Common myeloid progenitor, CD34-positive (primary cell): ENCODE measurements at regions of chr6 and their contacts with region 1.

Region 1: DNA sequence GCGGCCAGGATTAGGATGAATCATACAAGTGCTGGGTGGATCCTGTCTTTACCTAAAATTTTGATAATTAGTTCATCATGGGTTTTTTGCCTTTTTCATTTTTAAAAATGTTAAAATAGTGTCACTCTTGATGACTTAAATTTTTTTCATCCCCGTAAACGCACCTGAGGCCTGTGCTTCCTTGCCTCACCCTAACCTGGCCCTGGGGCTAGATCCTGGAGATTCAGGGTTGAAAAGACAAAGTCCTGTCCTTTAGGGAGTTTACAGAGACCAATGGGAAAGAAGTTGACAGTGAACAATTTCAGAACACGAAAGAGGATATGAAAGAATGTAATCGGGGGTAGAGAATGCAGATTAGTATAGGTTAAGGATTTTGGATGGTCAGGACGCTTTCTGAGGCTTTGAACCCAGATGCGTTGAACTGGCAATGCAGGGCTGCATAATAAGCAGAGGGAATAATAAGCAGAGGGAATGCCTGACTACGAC is 1.6 kb upstream of the FBXO5 start:
- DNase-seq: no peak
- H3K4me3 ChIP-seq: peak overlapping the region in 6 of 7 experiments; percentile 79 to 99 (median 90)
- H3K27ac ChIP-seq: peak overlapping the region; percentile 80 to 94
- H3K4me1 ChIP-seq: peaks cover 14 to 38% (median 29%) of the 10 kb centered on the region in 4 experiments
- H3K27me3 ChIP-seq: no peaks in the 10 kb centered on the region

Region 2: GRCh38 chr6:152854086-152854795 is 130.2 kb before region 1 on chr6:
- CTCF ChIA-PET with region 1: no interaction called
- POLR2A ChIA-PET with region 1: no interaction called
- DNase-seq: no peak
- H3K4me3 ChIP-seq: no peak overlapping the region
- H3K27ac ChIP-seq: no peak overlapping the region
- H3K4me1 ChIP-seq: no peaks in the 10 kb centered on the region
- H3K27me3 ChIP-seq: no peaks in the 10 kb centered on the region

Region 3: DNA sequence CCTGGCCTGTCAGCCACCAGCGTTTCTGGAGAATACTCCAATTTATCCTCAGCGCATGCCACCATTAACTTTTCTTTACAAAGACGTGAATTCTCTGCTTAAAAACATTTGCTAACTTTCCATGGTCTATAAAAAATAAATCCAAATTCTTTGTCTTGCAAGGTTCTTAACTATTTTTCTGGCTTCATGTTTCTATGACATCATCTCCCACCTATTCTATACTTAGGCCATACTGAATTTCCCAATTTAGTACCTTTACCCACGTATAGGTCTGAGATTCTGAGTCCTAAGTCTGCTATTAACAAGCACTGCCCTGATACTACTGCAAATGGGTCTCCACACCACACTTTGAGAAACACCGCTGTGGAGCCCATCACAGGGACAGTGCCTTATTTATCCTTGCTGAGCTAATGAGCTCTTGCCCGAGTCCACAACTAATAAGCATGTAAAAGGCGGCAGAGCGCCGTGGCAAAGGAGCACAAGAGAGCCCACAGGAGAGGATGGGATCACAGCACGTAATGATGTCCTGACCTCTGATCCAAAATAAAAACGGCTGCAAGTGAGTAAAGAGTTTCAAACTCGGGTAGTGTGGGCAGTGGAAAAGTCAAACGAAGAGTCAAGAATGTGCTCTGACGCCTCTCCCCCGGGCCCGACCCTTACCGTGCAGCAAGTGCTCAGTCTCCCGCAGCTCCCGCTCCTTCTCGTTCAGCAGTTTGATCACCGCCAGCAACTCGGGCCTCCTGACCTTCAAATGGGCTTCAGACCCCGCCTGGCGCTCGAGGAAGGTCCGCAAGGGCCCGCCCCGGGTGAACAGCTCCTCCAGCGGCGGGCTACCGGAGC is 17.6 kb after region 1 on chr6:
- CTCF ChIA-PET with region 1: interaction called, 12 read pairs
- POLR2A ChIA-PET with region 1: no interaction called
- DNase-seq: peak; percentile 12 to 53 (median 37)
- H3K4me3 ChIP-seq: peak overlapping the region; percentile 81 to 99 (median 90)
- H3K27ac ChIP-seq: peak overlapping the region; percentile 72 to 92
- H3K4me1 ChIP-seq: peaks cover 17 to 36% (median 23%) of the 10 kb centered on the region in 4 experiments
- H3K27me3 ChIP-seq: no peaks in the 10 kb centered on the region

Region 4: DNA sequence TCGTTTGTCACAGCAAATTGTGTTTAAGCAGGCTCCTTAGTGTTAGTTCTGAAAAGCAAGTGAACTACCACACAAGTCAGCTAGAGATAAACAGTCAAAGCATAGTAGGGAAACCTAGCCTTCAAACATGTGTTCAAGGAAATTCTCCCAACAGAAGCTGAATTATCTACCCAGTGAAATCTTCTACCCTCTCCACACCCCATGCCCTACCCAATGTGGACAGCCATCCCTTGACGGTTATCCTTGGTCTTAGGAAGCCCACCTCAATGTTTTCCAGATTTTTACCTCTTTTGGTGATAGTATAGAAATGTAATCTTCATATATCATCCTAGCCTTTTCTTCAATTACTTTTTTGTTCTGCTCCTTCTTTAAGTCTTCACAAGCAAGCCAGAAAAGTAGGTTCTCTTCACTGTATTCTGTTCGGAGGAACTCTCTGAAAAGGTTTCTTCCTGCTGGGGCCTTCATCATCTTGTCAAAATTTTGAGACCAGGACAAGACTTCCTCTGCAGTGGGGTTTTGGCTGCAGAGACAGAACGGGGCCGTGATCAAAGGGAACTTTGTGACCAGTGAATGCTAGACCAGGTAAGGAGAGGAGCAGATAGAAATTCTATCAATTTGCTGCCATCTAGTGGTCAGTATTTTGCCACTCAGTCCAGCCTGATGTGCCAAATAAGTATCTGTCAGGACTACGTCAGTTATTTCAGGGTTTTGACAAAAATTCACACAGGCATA is 39.7 kb after region 1 on chr6:
- CTCF ChIA-PET with region 1: interaction called, 10 read pairs
- POLR2A ChIA-PET with region 1: no interaction called
- DNase-seq: peak; percentile 67 to 75 (median 71)
- H3K4me3 ChIP-seq: no peak overlapping the region
- H3K27ac ChIP-seq: no peak overlapping the region
- H3K4me1 ChIP-seq: peaks cover 0 to 4% (median 0%) of the 10 kb centered on the region in 4 experiments
- H3K27me3 ChIP-seq: no peaks in the 10 kb centered on the region